ENCODE measurements at regions of chr2 and their contacts with region 1.

Region 1: DNA sequence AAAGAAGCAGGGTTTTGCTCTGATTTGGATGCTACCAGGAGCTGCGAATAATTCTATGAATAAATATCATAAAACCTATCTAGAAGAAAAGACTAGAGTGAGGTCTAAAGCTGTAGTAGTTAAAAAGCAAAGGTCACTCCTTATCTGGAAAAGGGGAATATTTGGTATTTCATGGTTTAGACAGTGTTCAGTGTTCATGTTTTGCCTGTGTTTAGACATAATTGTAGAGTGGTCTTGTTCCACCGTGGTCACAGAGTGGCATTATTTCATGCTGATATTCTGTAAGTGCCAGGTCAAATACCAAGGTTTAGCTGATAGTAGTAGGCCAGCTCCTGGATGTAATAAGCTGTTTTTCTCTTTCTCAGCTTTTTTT is 10.8 kb downstream of the SPAST start:
- DNase-seq: no peak
- H3K4me3 ChIP-seq: no peak overlapping the region
- H3K27ac ChIP-seq: no peak overlapping the region
- H3K4me1 ChIP-seq: peaks cover 4% of the 10 kb centered on the region
- H3K27me3 ChIP-seq: no peaks in the 10 kb centered on the region
- CTCF ChIP-seq: no peak

Region 2: DNA sequence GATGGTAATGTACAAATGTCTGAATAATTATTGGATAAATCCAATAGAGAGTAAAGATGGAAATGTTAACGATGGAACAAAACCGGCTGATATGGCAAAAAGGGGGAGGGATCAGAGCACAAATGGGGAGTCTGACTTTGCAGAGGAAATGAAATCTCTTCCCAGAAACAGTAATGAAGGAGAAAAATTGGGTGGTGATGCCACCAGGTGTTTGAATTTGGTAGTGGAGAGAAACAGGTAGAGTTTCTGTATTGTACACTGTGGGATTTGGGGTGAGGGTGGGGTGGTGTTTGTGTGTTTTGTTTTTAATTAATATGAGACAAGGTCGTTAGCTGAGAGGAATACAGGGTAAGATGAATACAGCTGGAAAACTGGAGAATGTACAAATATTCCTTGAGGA is 639.2 kb before region 1 on chr2:
- intact Hi-C with region 1: no loop called
- DNase-seq: no peak
- H3K4me3 ChIP-seq: no peak overlapping the region
- H3K27ac ChIP-seq: no peak overlapping the region
- H3K4me1 ChIP-seq: no peaks in the 10 kb centered on the region
- H3K27me3 ChIP-seq: no peaks in the 10 kb centered on the region
- CTCF ChIP-seq: no peak

Region 3: DNA sequence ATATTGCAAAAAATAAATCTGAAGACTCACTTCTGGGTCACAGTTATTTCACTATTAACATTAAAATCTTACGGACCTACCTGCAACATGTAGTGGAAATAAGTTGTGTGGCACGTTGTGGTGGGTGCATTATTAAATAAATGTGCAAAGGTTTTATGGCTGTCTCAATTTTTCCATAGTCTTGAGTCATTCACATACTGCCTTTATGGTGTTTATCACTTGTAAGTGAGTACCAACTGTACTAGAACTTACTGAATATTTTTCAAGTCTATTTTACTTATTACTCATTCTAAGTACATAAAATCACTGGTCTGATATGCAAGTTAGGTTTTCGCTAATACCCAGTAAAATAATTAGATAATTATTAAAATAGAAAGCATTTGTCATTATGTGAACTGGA is 43.9 kb after region 1 on chr2:
- intact Hi-C with region 1: no loop called
- DNase-seq: no peak
- H3K4me3 ChIP-seq: no peak overlapping the region
- H3K27ac ChIP-seq: no peak overlapping the region
- H3K4me1 ChIP-seq: no peaks in the 10 kb centered on the region
- H3K27me3 ChIP-seq: no peaks in the 10 kb centered on the region
- CTCF ChIP-seq: no peak

Region 4: DNA sequence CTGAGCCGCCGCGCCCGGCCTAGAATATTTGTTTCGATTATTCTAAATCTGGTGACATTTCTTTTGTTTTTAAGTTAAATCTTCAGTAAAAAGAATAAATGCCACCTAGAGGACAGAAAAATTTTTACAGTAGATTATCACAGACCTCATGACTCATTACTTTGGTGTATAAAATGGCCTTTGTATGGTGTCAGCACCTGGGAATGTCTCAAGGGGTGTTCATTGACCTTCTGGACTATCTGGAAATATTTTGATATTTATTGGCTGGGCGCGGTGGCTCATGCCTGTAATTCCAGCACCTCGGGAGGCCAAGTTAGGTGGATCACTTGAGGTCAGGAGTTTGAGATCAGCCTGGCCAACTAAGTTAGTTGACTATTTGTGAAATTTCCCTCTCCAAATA is 61.3 kb after region 1 on chr2:
- intact Hi-C with region 1: loop called (anchors 5 kb)
- DNase-seq: peak; percentile 21
- H3K4me3 ChIP-seq: no peak overlapping the region
- H3K27ac ChIP-seq: no peak overlapping the region
- H3K4me1 ChIP-seq: no peaks in the 10 kb centered on the region
- H3K27me3 ChIP-seq: no peaks in the 10 kb centered on the region
- CTCF ChIP-seq: no peak

Region 5: GRCh38 chr2:32516567-32516966 is 442.4 kb after region 1 on chr2:
- intact Hi-C with region 1: no loop called
- DNase-seq: no peak
- H3K4me3 ChIP-seq: no peak overlapping the region
- H3K27ac ChIP-seq: no peak overlapping the region
- H3K4me1 ChIP-seq: no peaks in the 10 kb centered on the region
- H3K27me3 ChIP-seq: no peaks in the 10 kb centered on the region
- CTCF ChIP-seq: no peak

Measured in colonic mucosa (tissue), 4 donors.